ENCODE measurements at regions of chr18 and their contacts with region 1.

Region 1: DNA sequence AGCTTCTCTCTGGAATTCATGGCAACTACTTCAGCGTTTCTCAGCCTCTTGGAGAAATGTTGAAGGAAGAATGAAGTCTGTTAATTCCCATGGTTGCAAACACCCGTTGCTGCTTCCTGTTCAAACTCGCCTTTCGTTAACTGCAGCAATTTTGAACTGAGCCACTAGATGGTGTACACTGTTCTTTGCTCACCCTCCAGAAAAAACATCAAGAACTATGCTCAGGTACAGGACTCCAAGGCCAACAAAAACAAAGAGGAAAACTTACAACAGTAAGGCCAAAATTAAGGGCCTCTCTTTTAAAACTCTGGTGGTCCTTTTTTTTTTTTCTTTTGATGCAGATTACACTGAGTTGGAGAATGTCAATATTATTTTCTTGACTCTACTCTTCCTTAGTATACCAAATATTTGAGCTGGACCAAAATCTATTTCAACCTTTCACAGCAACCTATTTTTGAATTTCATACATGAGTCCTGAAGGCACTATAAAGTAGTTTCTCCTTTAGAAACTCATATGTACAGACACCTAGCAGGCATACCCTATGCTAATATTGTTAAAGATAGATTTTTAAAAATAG is 58.2 kb downstream of the KLHL14 start:
- DNase-seq: no peak
- ATAC-seq: peak; percentile 98
- H3K4me3 Mint-ChIP-seq: no peak overlapping the region
- H3K27ac Mint-ChIP-seq: no peak overlapping the region
- H3K4me1 Mint-ChIP-seq: peaks cover 22% of the 10 kb centered on the region
- H3K27me3 Mint-ChIP-seq: no peaks in the 10 kb centered on the region
- CTCF ChIP-seq: peak; percentile 44

Region 2: GRCh38 chr18:32760391-32760790 is 45.7 kb after region 1 on chr18:
- CTCF ChIA-PET with region 1: interaction called, 13 read pairs
- POLR2A ChIA-PET with region 1: interaction called, 5 read pairs
- intact Hi-C with region 1: loop called (anchors 2 kb)
- DNase-seq: peak; percentile 57
- ATAC-seq: peak; percentile 97
- H3K4me3 Mint-ChIP-seq: peak overlapping the region; percentile 60
- H3K27ac Mint-ChIP-seq: peak overlapping the region; percentile 83
- H3K4me1 Mint-ChIP-seq: peaks cover 93% of the 10 kb centered on the region
- H3K27me3 Mint-ChIP-seq: no peaks in the 10 kb centered on the region
- CTCF ChIP-seq: no peak

Region 3: GRCh38 chr18:32815881-32816280 is 101.2 kb after region 1 on chr18:
- CTCF ChIA-PET with region 1: no interaction called
- POLR2A ChIA-PET with region 1: no interaction called
- intact Hi-C with region 1: loop called (anchors 5 kb)
- DNase-seq: no peak
- ATAC-seq: peak; percentile 34
- H3K4me3 Mint-ChIP-seq: peak overlapping the region; percentile 6
- H3K27ac Mint-ChIP-seq: peak overlapping the region; percentile 14
- H3K4me1 Mint-ChIP-seq: peaks cover 15% of the 10 kb centered on the region
- H3K27me3 Mint-ChIP-seq: no peaks in the 10 kb centered on the region
- CTCF ChIP-seq: no peak

Region 4: GRCh38 chr18:32911660-32912284 is 197.1 kb after region 1 on chr18:
- CTCF ChIA-PET with region 1: interaction called, 49 read pairs
- POLR2A ChIA-PET with region 1: interaction called, 10 read pairs
- intact Hi-C with region 1: no loop called
- DNase-seq: no peak
- ATAC-seq: no peak
- H3K4me3 Mint-ChIP-seq: no peak overlapping the region
- H3K27ac Mint-ChIP-seq: no peak overlapping the region
- H3K4me1 Mint-ChIP-seq: peaks cover 56% of the 10 kb centered on the region
- H3K27me3 Mint-ChIP-seq: no peaks in the 10 kb centered on the region
- CTCF ChIP-seq: no peak

Region 5: DNA sequence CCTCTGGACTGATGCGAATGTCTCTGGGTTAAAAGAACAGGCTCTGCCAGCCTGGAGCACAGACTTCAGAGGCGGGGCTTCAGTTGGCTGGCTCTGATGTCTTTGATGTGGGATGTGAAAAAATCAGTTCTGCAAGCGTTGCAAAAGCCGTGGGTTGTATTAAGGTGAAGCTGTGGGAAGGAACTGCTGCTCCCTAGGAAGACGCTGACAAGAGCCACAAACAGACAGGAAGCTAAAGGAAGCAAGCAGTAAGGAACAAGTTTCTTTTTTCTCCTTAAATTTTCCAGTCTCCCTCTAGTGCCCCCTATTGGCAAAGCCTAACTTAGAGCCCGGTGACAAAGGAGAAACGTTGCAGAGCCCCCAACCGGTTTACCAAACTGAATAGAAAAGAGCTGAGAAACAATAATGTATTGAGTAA is 486.9 kb after region 1 on chr18:
- CTCF ChIA-PET with region 1: no interaction called
- POLR2A ChIA-PET with region 1: no interaction called
- intact Hi-C with region 1: loop called (anchors 10 kb)
- DNase-seq: no peak
- ATAC-seq: no peak
- H3K4me3 Mint-ChIP-seq: no peak overlapping the region
- H3K27ac Mint-ChIP-seq: no peak overlapping the region
- H3K4me1 Mint-ChIP-seq: no peaks in the 10 kb centered on the region
- H3K27me3 Mint-ChIP-seq: peaks cover 12% of the 10 kb centered on the region
- CTCF ChIP-seq: no peak

Region 6: DNA sequence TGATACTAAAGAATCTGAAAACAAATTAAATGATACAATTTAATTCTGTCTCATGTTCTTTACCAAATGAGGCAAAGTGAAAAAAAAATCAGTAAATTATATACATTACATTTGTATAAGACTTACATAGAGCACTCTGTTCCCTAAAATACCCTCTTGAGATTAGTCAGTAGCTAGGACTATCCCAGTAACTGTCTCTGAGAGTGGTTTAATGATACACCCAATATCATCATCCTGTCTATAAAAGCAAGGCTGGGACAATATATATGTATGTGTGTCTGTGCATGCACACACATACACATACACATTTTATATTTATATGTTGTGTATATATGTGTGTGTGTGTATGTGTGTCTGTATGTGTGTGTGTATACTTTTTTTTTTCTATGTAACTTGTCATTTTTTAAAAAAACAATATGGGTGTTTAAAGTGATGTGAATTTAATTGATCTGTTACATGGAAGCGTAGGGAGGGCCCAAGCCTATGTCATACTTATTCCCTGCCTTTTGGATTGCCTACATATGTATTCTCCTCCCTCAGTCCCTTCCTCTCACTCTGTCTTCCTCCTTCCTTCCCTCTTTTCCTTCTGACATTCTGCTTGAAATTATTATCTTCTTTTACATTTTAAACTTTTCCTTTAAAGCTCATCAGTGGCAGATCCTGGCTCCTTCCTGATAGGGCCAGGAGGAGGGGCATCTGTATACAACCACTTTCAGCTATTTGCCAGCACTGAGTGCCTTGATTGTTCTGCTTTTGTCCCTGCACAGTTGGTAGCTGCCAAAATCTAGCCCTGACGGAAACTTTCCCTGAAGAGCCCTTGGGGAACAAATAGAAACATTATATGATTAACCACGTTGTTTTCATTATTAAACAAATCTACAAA is 870.1 kb after region 1 on chr18:
- CTCF ChIA-PET with region 1: no interaction called
- POLR2A ChIA-PET with region 1: no interaction called
- intact Hi-C with region 1: no loop called
- DNase-seq: no peak
- ATAC-seq: no peak
- H3K4me3 Mint-ChIP-seq: no peak overlapping the region
- H3K27ac Mint-ChIP-seq: no peak overlapping the region
- H3K4me1 Mint-ChIP-seq: no peaks in the 10 kb centered on the region
- H3K27me3 Mint-ChIP-seq: peaks cover 6% of the 10 kb centered on the region
- CTCF ChIP-seq: no peak

Measured in activated B cell treated with CpG ODN at 0.5 μM for 24 hours (primary cell).